Activated B cell treated with CpG ODN at 0.5 μM for 24 hours (primary cell): ENCODE measurements at regions of chr2 and their contacts with region 1.

Region 1: GRCh38 chr2:43524177-43524965 is 71.5 kb downstream of the THADA start:
- DNase-seq: no peak
- ATAC-seq: no peak
- H3K4me3 Mint-ChIP-seq: no peak overlapping the region
- H3K27ac Mint-ChIP-seq: no peak overlapping the region
- H3K4me1 Mint-ChIP-seq: peaks cover 3% of the 10 kb centered on the region
- H3K27me3 Mint-ChIP-seq: no peaks in the 10 kb centered on the region
- CTCF ChIP-seq: no peak

Region 2: DNA sequence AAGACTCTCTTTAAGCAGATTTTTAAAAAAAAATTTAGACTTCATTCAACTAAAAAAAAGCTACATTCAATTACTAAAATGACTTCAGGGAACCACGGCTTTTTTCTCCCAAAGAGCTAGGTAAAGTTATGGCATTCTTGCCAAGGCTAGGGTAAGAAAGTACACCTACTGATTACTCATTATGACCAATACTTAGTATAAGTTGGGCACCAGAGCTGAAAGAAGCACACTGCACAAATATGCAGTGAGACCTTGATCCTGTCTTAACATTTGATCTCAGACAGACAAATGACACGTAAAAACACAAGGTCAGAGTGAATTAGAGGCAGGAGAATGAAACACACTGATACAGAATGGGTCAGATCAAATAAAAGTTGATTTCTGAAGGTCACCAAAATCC is 17.2 kb before region 1 on chr2:
- CTCF ChIA-PET with region 1: no interaction called
- POLR2A ChIA-PET with region 1: no interaction called
- intact Hi-C with region 1: loop called (anchors 2 kb)
- DNase-seq: no peak
- ATAC-seq: no peak
- H3K4me3 Mint-ChIP-seq: no peak overlapping the region
- H3K27ac Mint-ChIP-seq: no peak overlapping the region
- H3K4me1 Mint-ChIP-seq: no peaks in the 10 kb centered on the region
- H3K27me3 Mint-ChIP-seq: no peaks in the 10 kb centered on the region
- CTCF ChIP-seq: no peak

Region 3: GRCh38 chr2:43559391-43560230 is 35.2 kb after region 1 on chr2:
- CTCF ChIA-PET with region 1: no interaction called
- POLR2A ChIA-PET with region 1: no interaction called
- intact Hi-C with region 1: no loop called
- DNase-seq: no peak
- ATAC-seq: no peak
- H3K4me3 Mint-ChIP-seq: no peak overlapping the region
- H3K27ac Mint-ChIP-seq: no peak overlapping the region
- H3K4me1 Mint-ChIP-seq: no peaks in the 10 kb centered on the region
- H3K27me3 Mint-ChIP-seq: no peaks in the 10 kb centered on the region
- CTCF ChIP-seq: no peak

Region 4: GRCh38 chr2:43637030-43637803 is 112.8 kb after region 1 on chr2 and contains the start of gene PLEKHH2:
- CTCF ChIA-PET with region 1: no interaction called
- POLR2A ChIA-PET with region 1: no interaction called
- intact Hi-C with region 1: no loop called
- DNase-seq: peak; percentile 73
- ATAC-seq: peak; percentile 100
- H3K4me3 Mint-ChIP-seq: peak within 1 kb of the TSS; percentile 81
- H3K27ac Mint-ChIP-seq: no peak within 1 kb of the TSS
- H3K4me1 Mint-ChIP-seq: peaks cover 13% of the 10 kb centered on the region
- H3K27me3 Mint-ChIP-seq: peaks cover 40% of the 10 kb centered on the region
- CTCF ChIP-seq: no peak
- total RNA-seq, gene PLEKHH2: 0.07 and 0.11 TPM in 2 replicates